ENCODE measurements at regions of chr6 and their contacts with region 1.

Region 1: DNA sequence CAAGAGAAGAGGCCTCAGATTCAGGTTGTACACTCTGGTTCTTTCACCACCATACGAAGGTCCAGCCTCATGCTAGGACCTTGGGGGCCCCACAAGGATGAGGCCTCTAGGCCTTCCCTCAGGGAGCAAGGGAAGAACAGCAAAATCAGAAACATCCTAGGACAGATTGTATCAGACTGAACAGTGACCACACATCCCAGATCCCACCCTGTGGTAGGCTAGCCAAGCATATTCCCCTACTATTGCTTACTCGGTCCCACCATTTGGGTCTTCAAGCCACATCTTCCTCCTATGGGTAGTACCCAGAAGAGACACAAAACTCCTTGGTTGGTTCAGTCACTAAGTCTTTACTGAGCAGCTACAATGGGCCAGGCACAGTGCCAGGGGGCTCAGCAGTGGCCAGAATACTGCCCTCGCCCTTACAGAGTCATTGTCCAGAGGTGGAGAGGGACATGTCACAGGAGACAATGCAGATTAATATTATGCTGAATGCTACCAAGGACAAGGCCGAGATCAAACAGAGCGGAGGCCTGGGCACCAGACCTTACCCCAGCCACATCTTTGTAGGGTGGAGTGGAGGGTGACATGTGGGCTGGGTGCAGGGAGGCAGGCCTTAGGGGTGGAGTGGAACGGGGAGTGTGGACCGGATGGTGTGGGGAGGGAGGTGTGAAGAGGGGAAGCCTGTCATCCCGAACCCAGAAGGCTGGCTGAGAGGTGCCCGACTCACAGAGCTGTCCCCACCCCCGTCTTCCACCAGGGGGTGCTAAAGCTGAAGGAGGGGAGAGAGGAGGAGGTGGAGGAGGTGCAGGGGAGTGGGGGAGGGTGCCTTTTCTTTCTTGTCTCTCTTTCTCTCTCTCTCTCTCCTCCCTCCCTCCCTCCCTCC is 6.8 kb upstream of the MAPK13 start:
- DNase-seq: peak; percentile 79 to 93 (median 88)
- ATAC-seq: peak; percentile 88 to 94 (median 92)
- H3K4me3 ChIP-seq: no peak overlapping the region
- H3K27ac ChIP-seq: no peak overlapping the region
- H3K4me1 ChIP-seq: no peaks in the 10 kb centered on the region
- H3K27me3 ChIP-seq: no peaks in the 10 kb centered on the region
- CTCF ChIP-seq: peak; percentile 40 to 63 (median 50)

Region 2: DNA sequence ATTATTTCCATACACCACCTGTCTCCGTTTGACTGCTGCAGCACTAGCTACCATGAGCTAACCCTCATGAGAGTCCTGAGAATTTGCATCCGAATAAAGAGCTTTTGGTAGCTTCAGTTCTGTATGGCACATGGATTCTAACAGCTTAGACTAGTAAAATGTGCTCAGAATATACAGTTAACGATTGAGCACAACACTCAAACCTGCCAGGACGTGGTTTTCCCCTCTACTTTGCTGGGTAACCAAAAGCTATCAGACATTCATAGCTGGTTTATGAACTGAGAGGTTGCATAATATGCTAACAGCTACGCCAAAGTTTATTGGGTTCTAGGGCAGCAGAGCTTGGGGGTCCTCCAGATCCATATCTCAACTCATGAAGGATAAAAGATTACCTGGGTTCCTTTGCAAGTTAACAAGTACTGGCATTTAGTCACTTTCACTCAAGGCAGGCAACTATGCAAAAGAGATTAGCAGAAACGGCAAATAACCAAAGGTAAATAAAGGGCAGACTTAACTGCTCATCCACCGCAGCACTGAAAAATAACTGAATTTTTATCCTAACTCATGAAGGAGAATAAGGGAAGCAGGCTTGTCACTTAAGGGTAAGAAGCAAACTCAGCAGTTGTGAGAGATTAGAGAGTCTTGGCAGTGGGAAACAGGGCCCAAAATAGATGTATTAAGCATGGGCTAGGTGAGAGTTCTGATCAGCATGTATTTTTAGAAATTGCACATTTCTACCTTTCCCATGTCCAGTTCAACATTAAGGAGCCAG is 1760.4 kb before region 1 on chr6:
- intact Hi-C with region 1: no loop called
- DNase-seq: no peak
- ATAC-seq: peak in 2 of 4 donors; percentile 39 to 46
- H3K4me3 ChIP-seq: no peak overlapping the region
- H3K27ac ChIP-seq: no peak overlapping the region
- H3K4me1 ChIP-seq: peaks cover 8 to 13% (median 8%) of the 10 kb centered on the region in 3 donors
- H3K27me3 ChIP-seq: no peaks in the 10 kb centered on the region
- CTCF ChIP-seq: no peak

Region 3: DNA sequence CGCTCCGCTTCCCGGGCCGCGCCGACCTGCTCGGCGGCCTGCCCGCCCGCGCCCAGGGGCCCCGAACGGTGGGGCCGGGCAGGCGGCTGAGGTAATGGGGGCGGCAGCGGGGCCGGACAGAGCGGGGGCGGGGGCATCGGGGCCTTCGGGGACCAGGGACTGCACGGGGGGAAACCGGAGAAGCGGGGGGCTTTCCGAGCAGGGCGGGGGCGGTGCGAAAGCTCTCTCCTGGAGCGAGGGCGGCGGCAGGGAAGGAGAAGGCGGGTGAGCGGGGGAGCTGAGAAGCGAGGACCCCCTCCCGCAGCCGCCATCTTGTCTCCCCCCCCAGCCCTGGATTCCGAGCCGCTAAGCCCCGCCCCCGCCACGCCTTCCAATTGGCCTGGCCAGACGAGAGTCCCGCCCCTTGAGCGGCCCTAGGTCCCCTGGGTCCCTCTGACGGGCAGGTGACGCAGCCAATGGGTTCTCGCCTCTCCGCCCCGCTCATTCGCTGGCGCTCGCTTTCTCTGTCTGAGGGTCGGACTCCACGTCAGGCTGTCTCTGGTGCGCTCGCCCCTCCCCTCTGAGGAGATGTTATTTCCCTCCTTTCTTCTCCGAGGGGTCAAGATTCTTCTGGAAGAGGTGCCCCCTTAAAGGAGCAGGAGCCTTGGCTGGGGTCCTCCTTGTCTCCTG is 73.5 kb after region 1 on chr6:
- intact Hi-C with region 1: loop called in 1 of 3 experiments (anchors 10 kb)
- DNase-seq: peak; percentile 98 to 100 (median 100)
- ATAC-seq: peak; percentile 93 to 97 (median 94)
- H3K4me3 ChIP-seq: peak overlapping the region; percentile 40 to 65 (median 59)
- H3K27ac ChIP-seq: peak overlapping the region; percentile 85 to 94 (median 92)
- H3K4me1 ChIP-seq: peaks cover 5 to 7% (median 7%) of the 10 kb centered on the region in 3 donors
- H3K27me3 ChIP-seq: no peaks in the 10 kb centered on the region
- CTCF ChIP-seq: no peak